GM10248 (cell line): ENCODE measurements at regions of chr22 and their contacts with region 1.

Region 1: DNA sequence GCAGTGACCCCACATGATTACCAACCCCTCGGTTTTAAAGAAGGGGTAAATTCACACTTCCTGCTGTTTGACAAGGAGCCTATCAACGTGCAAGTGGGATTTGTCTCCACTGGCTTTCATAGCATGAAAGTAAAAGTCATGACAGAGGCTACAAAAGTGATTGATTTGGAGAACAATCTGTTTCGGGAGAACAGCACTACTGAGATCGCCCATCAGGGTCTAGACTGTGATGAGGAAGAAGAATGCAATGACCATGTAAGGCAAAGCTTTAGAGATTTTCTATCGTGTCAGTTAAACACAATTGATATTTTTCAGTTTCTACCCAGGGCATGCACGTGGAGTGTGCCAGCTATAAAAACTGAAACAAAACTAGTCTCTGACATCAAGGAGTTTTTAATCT is 41.7 kb downstream of the HORMAD2 start:
- DNase-seq: no peak
- CTCF ChIP-seq: no peak

Region 2: GRCh38 chr22:30079952-30080533 is 41.9 kb before region 1 on chr22 and contains the start of gene HORMAD2:
- CTCF ChIA-PET with region 1: no interaction called
- POLR2A ChIA-PET with region 1: no interaction called
- DNase-seq: peak; percentile 31
- CTCF ChIP-seq: no peak

Region 3: DNA sequence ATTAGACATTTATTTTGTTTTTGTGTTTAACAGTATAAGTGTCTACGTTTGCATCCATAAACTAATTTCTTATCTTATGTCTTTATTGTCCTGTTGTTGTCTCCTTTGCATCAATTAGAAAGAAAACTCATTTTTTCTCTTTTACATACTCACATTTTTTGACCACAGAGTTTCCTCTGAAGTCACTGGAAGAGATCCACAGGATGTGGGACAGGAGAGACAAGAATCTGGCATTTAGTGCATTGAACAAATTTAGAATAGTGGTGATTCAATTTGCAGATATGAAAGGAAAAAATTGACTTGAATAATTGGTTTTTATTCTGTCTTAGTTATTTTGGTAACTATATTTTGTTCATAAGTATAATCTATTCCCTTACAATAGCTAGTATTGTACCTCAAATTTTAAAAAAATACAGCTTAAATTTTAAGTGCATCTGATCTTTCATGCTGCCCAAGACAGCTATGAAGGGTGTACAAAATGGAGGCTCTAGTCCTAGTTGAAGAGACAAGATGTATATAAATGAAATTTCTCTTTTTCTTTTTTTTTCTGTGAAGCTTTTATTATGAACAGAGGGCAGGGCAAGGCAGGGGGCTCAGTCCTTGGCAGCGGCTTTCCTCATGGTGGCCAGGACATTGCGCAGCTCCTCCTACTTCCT is 17.3 kb before region 1 on chr22:
- CTCF ChIA-PET with region 1: interaction called, 27 read pairs
- POLR2A ChIA-PET with region 1: no interaction called
- DNase-seq: no peak
- CTCF ChIP-seq: no peak